ENCODE measurements at regions of chr14 and their contacts with region 1.

Region 1: GRCh38 chr14:77314043-77314442 is 6.6 kb downstream of the POMT2 start:
- DNase-seq: no peak
- H3K4me3 ChIP-seq: no peak overlapping the region
- H3K27ac ChIP-seq: no peak overlapping the region
- H3K4me1 ChIP-seq: no peaks in the 10 kb centered on the region
- H3K27me3 ChIP-seq: no peaks in the 10 kb centered on the region
- CTCF ChIP-seq: no peak
- POLR2A ChIP-seq: no peak

Region 2: DNA sequence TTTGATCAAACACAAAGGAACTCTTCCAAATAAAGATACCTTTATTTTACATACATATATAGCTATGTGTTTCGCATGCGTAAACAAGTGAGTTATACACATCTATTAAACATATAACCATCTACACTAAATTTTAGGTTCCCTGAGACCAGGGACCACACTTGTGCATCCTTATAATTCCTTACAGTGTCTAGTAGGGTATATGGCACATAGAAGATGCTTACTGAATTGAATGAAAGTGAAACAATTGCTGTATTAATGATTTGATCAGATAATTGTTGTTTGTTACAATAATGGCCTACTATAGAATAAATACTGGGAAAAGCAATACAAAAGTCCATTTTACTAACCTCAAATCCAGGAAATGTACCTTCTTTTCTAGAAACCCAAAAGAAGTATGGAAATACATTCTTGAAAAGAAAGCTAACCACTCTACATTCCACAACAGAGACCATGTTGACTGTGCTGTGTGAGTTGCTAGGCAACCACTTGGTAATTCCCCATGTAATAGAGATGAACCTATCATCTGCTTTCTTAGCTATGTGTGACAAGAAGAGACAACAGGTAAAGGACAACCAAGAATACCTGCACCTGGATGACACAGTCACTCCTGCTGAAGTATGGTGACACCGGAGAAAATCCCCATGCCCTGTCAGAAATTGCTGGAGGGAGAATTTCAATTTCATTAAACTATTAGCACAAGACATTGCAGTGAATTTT is 227.9 kb before region 1 on chr14:
- CTCF ChIA-PET with region 1: no interaction called
- POLR2A ChIA-PET with region 1: no interaction called
- dilution Hi-C with region 1: no loop called
- intact Hi-C with region 1: no loop called
- DNase-seq: no peak
- H3K4me3 ChIP-seq: no peak overlapping the region
- H3K27ac ChIP-seq: no peak overlapping the region
- H3K4me1 ChIP-seq: no peaks in the 10 kb centered on the region
- H3K27me3 ChIP-seq: peaks cover 13 to 24% of the 10 kb centered on the region in 2 experiments
- CTCF ChIP-seq: no peak
- POLR2A ChIP-seq: no peak

Region 3: DNA sequence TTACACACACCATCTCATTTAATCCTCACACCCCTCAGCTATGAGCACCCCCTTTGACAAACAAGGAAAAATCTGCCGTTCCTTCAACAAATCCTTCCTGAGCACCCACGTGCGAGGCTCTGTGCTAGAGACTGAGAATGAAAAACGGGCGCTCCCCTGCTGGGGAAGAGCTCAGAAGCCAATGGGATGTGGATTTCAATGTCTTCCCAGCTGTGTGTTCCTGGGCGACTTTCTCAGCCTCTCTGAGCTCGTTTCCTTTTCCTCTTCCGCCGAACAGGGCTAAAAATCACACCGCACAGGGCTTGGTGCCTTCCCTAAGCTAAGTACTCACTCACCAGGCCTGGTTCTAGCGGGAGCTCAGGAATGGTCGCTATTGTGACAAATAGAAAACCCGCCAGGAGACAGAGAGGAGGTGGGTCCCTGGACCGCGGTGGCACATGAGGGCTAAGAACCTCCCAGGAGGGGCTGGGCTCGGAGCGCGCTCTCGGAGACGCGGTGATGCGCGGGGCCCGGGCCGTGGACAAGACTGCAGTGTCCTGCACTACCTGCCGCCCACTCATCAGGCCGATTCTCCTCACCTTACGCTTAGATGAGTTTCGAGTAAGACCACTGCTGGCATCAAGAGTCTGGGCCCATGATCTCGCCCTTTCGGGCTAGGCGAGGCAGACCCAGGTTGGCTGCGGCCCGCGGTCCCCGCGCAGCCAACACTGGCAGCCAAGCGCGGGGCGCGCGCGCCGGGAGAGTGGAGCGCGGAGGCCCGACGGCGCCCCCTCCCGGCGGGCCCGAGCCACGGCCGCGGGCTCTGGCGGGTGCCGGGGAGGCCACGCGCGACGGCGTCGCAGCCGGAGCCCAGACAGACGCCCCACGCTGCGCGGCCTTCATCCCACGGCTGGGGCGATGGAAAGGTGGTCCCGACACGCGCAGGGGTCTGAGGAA is 189.4 kb before region 1 on chr14:
- CTCF ChIA-PET with region 1: interaction called, 10 read pairs
- POLR2A ChIA-PET with region 1: no interaction called
- dilution Hi-C with region 1: no loop called
- intact Hi-C with region 1: no loop called
- DNase-seq: peak; percentile 53
- H3K4me3 ChIP-seq: peak overlapping the region; percentile 4 to 42 (median 36)
- H3K27ac ChIP-seq: no peak overlapping the region
- H3K4me1 ChIP-seq: peaks cover 6% of the 10 kb centered on the region
- H3K27me3 ChIP-seq: peaks cover 12 to 16% of the 10 kb centered on the region in 2 experiments
- CTCF ChIP-seq: peak; percentile 43 to 81
- POLR2A ChIP-seq: no peak

Region 4: DNA sequence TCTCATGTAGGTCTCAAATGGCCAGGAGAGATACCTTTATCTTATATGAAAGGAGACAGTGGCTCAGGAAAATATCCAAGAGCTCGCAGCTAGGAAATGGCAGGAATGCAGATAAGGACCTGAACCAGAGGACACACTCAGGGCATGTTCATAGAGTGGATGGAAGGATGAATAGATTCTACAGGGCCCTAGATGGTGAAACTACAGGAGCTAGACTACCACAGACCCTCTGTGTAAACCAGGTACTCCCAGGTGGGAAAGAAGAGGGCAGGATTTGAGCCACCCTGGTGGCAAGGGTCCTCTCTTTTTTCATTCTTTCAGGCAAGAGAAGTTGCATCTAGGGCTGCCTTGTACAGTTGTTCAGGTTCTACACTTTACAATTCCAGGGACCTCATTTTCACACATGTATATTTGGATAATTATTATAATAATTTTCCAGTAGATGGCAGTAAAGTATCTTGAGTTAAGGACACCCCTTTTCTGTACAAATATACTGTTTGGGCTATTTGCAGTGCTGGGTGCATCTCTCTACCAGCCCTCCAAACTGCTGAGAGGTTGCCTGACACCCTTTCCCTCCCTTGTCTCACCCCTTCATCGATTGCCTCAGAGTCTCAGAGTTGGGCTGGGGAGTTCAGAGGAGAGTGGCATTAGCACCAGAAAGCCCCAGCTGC is 162.0 kb before region 1 on chr14:
- CTCF ChIA-PET with region 1: interaction called, 212 read pairs
- POLR2A ChIA-PET with region 1: no interaction called
- dilution Hi-C with region 1: no loop called
- intact Hi-C with region 1: loop called (anchors 1 kb)
- DNase-seq: peak; percentile 28
- H3K4me3 ChIP-seq: no peak overlapping the region
- H3K27ac ChIP-seq: no peak overlapping the region
- H3K4me1 ChIP-seq: no peaks in the 10 kb centered on the region
- H3K27me3 ChIP-seq: peaks cover 11 to 19% of the 10 kb centered on the region in 2 experiments
- CTCF ChIP-seq: no peak
- POLR2A ChIP-seq: no peak

Region 5: DNA sequence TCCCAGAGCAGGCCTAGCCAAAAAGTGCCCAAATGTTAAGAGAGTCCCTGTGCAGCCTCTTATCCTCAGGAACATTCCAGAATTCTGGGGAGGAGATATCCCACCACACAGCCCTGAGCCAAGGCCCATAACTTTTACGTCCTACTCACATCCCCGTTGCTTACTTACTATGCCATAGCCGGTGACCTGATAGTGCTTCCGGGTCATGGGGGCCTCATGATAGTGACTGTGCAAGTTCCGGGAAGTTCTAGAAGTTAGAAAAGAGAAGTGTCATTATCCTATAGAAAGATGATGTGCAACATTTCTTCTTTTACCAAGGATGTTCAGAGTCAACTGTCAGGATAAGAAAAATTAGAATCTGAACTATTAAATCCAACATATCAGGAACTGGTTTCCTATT is 27.5 kb before region 1 on chr14:
- CTCF ChIA-PET with region 1: interaction called, 17 read pairs
- POLR2A ChIA-PET with region 1: no interaction called
- dilution Hi-C with region 1: no loop called
- intact Hi-C with region 1: no loop called
- DNase-seq: no peak
- H3K4me3 ChIP-seq: no peak overlapping the region
- H3K27ac ChIP-seq: no peak overlapping the region
- H3K4me1 ChIP-seq: no peaks in the 10 kb centered on the region
- H3K27me3 ChIP-seq: no peaks in the 10 kb centered on the region
- CTCF ChIP-seq: no peak
- POLR2A ChIP-seq: no peak

Region 6: DNA sequence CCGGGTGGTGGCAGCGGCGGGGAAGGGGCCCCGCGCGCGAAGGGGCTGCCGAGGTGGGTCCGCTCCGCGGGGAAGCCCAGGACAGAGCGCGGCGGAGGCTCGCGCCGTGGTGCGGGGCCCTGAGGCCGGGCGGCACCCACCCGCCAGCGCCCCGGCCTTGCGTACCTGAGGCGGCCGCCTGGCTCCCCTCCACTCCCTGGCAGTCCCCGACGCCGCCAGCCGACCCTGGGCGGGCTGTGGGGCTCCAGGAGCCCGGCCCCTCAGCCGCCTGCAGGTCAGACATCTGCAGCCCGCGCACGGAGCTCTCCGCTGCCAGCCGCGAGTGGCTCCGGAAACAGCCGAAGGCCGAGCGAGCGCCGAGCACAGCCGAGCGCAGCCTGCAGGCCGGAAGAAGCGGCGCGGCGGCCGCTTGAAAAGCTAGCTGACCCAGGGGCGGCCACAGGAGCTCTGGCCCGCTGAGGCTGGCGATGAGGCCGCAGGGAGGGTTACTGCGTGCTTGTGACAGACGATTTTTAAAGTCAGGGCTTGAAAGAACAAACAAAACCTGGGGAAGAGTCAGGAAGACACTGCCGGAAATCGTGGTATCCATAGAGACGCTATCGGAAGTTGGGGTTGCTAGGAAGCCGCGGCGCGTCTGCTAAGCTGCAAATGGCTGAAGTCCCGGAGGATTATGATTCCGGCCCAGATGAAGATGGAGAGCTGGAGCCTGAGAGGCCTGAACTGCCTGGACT is 62.9 kb after region 1 on chr14 and contains the starts of genes SAMD15 and TMED8:
- CTCF ChIA-PET with region 1: interaction called, 15 read pairs
- POLR2A ChIA-PET with region 1: no interaction called
- dilution Hi-C with region 1: no loop called
- intact Hi-C with region 1: no loop called
- DNase-seq: peak; percentile 95
- H3K4me3 ChIP-seq: peak within 1 kb of the TSS; percentile 58 to 76 (median 69)
- H3K27ac ChIP-seq: peak within 1 kb of the TSS; percentile 71
- H3K4me1 ChIP-seq: peaks cover 15% of the 10 kb centered on the region
- H3K27me3 ChIP-seq: no peaks in the 10 kb centered on the region
- CTCF ChIP-seq: peak in 1 of 2 donors; percentile 30
- POLR2A ChIP-seq: peak; percentile 58
- total RNA-seq, gene SAMD15: 0.65 and 1.1 TPM in 2 replicates
- total RNA-seq, gene TMED8: 12.6 and 13.5 TPM in 2 replicates

Region 7: DNA sequence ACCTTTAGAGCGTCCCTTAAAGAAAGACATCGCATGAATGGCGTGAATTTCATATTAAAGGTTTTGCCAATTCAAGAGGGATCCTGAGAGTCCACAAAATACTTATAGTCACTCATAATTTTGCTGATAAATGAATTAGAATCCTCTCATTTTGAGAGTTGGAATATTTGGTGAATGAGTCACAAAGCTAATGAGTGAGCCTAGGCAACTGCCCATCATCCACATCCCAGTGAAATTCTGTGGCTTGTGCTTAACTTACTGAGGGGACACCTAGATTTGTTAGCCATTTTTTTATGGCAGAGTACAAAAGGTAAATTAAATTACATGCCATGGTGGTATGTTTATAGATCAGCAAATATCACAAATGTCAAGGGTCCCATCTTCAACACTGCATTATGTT is 122.0 kb after region 1 on chr14:
- CTCF ChIA-PET with region 1: no interaction called
- POLR2A ChIA-PET with region 1: no interaction called
- dilution Hi-C with region 1: no loop called
- intact Hi-C with region 1: no loop called
- DNase-seq: no peak
- H3K4me3 ChIP-seq: no peak overlapping the region
- H3K27ac ChIP-seq: no peak overlapping the region
- H3K4me1 ChIP-seq: no peaks in the 10 kb centered on the region
- H3K27me3 ChIP-seq: no peaks in the 10 kb centered on the region
- CTCF ChIP-seq: no peak
- POLR2A ChIP-seq: no peak

Measured in endothelial cell of umbilical vein (primary cell).